Activated CD4-positive, alpha-beta T cell treated with anti-CD3 and anti-CD28 coated beads for 36 hours (primary cell): ENCODE measurements at regions of chr1 and their contacts with region 1.

Region 1: DNA sequence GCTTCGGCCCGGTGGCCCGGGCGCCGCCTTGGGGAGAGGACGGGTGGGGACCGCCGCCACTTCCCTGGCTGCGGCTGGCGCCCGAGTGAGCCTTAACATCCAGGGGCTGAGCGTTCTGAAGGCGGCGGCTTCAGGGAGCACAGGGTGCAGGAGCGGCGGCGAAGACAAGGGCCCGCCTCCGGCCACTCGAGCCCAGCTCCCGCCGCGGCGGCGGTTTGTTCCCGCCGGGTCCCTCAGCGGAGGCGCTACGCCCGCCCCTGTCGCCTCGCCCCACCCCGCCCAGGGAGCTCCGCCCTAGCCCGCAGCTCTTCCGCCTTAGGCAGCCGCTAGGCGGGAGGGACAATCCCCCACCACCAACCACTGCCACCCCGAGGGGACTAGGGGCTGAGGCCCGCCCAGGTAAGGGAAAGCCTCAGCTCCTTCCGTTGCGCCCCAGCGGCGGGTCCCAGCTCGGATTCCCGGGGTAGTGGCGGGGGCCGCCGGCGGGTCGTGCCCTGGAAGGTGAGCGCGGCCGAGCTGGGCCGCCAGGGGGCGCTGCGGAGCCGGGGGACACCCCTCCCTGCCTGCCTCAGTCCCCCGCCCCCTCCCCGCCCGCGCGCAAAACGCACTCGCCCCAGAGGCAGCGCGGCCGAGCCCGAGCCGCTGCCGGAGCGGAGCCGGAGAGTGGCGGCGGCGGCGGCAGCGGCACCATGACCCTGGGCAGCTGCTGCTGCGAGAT is at the start of gene FOXD2:
- DNase-seq: peak; percentile 95
- ATAC-seq: peak; percentile 90
- H3K4me3 Mint-ChIP-seq: peak within 1 kb of the TSS; percentile 92
- H3K27ac Mint-ChIP-seq: peak within 1 kb of the TSS; percentile 73
- H3K4me1 Mint-ChIP-seq: peaks cover 24% of the 10 kb centered on the region
- H3K27me3 Mint-ChIP-seq: peaks cover 26% of the 10 kb centered on the region
- total RNA-seq, gene FOXD2: 0.05 to 0.07 TPM

Region 2: GRCh38 chr1:47179017-47179987 is 258.3 kb before region 1 on chr1:
- CTCF ChIA-PET with region 1: interaction called, 3 read pairs
- POLR2A ChIA-PET with region 1: interaction called, 6 read pairs
- intact Hi-C with region 1: loop called (anchors 2 to 5 kb)
- DNase-seq: peak; percentile 91
- ATAC-seq: peak; percentile 90
- H3K4me3 Mint-ChIP-seq: peak overlapping the region; percentile 57
- H3K27ac Mint-ChIP-seq: no peak overlapping the region
- H3K4me1 Mint-ChIP-seq: peaks cover 8% of the 10 kb centered on the region
- H3K27me3 Mint-ChIP-seq: peaks cover 22% of the 10 kb centered on the region

Region 3: DNA sequence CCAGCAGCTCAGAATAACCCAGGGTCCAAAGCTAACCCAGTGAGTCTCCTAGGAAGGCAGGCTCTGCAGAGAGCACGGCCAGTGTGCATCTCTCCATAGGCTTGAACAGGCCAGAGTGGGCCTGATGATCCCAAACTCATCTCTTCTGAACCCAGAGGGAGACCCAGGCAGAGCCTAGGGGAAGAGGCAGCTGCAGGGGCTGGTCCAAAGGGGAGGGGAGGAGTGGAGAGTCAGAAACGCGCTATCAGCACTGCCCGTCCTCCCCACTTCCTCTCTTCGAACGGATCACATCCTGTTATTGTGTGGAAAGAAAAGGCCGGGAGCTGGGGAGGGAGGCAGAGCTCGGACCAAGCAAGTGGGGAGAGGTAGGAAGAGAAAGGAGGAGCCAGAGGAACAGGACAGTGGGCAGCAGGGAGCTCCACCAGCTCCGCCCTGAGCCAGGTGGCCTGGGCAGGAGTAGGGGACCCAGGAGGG is 225.8 kb before region 1 on chr1:
- CTCF ChIA-PET with region 1: no interaction called
- POLR2A ChIA-PET with region 1: no interaction called
- intact Hi-C with region 1: no loop called
- DNase-seq: no peak
- ATAC-seq: no peak
- H3K4me3 Mint-ChIP-seq: no peak overlapping the region
- H3K27ac Mint-ChIP-seq: no peak overlapping the region
- H3K4me1 Mint-ChIP-seq: no peaks in the 10 kb centered on the region
- H3K27me3 Mint-ChIP-seq: no peaks in the 10 kb centered on the region

Region 4: GRCh38 chr1:47313915-47314664 is 123.5 kb before region 1 on chr1 and contains the start of gene STIL:
- CTCF ChIA-PET with region 1: interaction called, 3 read pairs
- POLR2A ChIA-PET with region 1: interaction called, 9 read pairs
- intact Hi-C with region 1: loop called in 1 of 2 experiments (anchors 1 kb)
- DNase-seq: peak; percentile 99
- ATAC-seq: peak; percentile 97
- H3K4me3 Mint-ChIP-seq: peak within 1 kb of the TSS; percentile 84
- H3K27ac Mint-ChIP-seq: peak within 1 kb of the TSS; percentile 92
- H3K4me1 Mint-ChIP-seq: peaks cover 10% of the 10 kb centered on the region
- H3K27me3 Mint-ChIP-seq: no peaks in the 10 kb centered on the region
- total RNA-seq, gene STIL: 33.9 to 36.0 TPM

Region 5: GRCh38 chr1:47388891-47389238 is 48.7 kb before region 1 on chr1:
- CTCF ChIA-PET with region 1: interaction called, 15 read pairs
- POLR2A ChIA-PET with region 1: no interaction called
- intact Hi-C with region 1: loop called in 1 of 2 experiments (anchors 1 kb)
- DNase-seq: peak; percentile 76
- ATAC-seq: peak; percentile 82
- H3K4me3 Mint-ChIP-seq: no peak overlapping the region
- H3K27ac Mint-ChIP-seq: no peak overlapping the region
- H3K4me1 Mint-ChIP-seq: no peaks in the 10 kb centered on the region
- H3K27me3 Mint-ChIP-seq: peaks cover 3% of the 10 kb centered on the region

Region 6: GRCh38 chr1:47449822-47450552 is 12.4 kb after region 1 on chr1:
- CTCF ChIA-PET with region 1: interaction called, 14 read pairs
- POLR2A ChIA-PET with region 1: no interaction called
- intact Hi-C with region 1: no loop called
- DNase-seq: peak; percentile 43
- ATAC-seq: no peak
- H3K4me3 Mint-ChIP-seq: no peak overlapping the region
- H3K27ac Mint-ChIP-seq: no peak overlapping the region
- H3K4me1 Mint-ChIP-seq: peaks cover 7% of the 10 kb centered on the region
- H3K27me3 Mint-ChIP-seq: peaks cover 69% of the 10 kb centered on the region

Region 7: GRCh38 chr1:47710329-47711071 is 272.9 kb after region 1 on chr1:
- CTCF ChIA-PET with region 1: interaction called, 28 read pairs
- POLR2A ChIA-PET with region 1: no interaction called
- intact Hi-C with region 1: loop called (anchors 1 to 2 kb)
- DNase-seq: peak; percentile 84
- ATAC-seq: peak; percentile 83
- H3K4me3 Mint-ChIP-seq: no peak overlapping the region
- H3K27ac Mint-ChIP-seq: no peak overlapping the region
- H3K4me1 Mint-ChIP-seq: peaks cover 5% of the 10 kb centered on the region
- H3K27me3 Mint-ChIP-seq: peaks cover 64% of the 10 kb centered on the region

Region 8: GRCh38 chr1:47755101-47755990 is 317.7 kb after region 1 on chr1:
- CTCF ChIA-PET with region 1: interaction called, 10 read pairs
- POLR2A ChIA-PET with region 1: no interaction called
- intact Hi-C with region 1: no loop called
- DNase-seq: peak; percentile 78
- ATAC-seq: peak; percentile 66
- H3K4me3 Mint-ChIP-seq: no peak overlapping the region
- H3K27ac Mint-ChIP-seq: no peak overlapping the region
- H3K4me1 Mint-ChIP-seq: no peaks in the 10 kb centered on the region
- H3K27me3 Mint-ChIP-seq: peaks cover 13% of the 10 kb centered on the region

Region 9: DNA sequence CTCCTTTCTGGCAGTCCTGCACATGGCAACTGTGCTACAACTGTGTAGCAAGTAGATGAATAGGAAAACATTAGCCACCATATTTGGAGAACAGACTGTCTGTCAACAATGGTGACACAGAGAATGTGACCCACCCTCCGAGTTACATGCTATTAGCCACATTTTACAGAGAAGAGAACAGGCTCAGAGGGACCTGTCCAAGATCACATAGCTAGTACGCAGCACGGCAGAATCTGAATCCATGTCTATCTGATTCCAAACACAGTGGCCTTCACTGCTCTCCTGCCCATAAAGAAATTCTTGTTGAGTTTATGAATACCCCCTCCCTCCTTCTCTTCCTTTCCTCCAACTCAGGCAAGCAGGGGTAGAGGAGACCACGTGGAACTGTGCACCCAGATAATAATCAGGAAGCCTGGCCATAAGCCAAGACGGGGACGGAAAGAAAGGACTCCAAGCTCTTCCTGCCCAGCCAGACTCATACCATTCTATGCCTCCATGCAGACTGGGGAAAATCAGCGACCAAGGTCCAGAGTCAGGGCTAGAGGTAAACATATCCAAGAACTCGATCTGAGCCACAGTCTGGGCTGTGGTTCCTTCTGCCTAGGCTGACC is 480.8 kb after region 1 on chr1:
- CTCF ChIA-PET with region 1: no interaction called
- POLR2A ChIA-PET with region 1: no interaction called
- intact Hi-C with region 1: no loop called
- DNase-seq: no peak
- ATAC-seq: no peak
- H3K4me3 Mint-ChIP-seq: no peak overlapping the region
- H3K27ac Mint-ChIP-seq: no peak overlapping the region
- H3K4me1 Mint-ChIP-seq: no peaks in the 10 kb centered on the region
- H3K27me3 Mint-ChIP-seq: peaks cover 6% of the 10 kb centered on the region